Activated naive CD4-positive, alpha-beta T cell treated with anti-CD3 and anti-CD28 coated beads, Interleukin-2, amount 10 ng/mL, durations not matched to agents 7 days and 5 days (primary cell): ENCODE measurements at regions of chr11 and their contacts with region 1.

Region 1: DNA sequence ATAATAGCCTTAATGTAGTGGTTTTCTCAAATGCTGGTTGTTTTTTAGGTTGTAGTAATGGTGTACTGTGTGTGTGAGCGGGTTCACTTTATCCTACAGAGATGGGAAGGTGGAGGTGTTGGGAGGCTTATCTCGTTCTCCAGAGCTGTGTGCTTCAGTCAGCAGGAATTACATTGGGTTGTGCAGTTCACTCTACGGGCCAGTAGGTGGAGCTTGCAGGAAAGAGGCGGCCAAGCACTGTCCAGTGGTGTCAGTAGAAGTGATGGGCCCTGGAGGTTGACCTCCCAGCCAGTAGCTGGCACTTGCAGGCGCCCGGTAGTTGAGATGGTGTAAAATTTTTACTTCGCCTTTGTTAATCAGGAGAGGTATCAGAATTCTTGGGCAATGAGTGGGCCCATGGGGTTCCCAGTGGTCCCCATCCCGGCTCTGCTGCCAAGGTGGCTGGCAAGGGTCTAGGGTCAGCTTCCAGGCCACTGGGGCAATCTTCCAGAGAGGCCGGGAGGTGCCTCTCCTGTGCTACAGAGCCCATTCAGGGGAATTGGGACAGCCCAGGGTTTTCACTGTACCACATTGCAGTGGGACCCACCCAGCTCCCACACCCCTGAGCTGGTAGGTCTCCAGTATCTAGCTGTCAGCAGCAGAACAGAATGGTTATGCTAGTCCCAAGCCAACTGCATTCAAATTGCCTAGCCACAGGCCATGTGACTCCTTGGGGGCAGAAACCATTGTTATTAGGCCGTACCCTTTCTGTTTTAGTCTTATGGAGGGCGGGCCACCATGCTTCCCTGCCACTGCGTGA is 43.9 kb downstream of the BIRC2 start:
- DNase-seq: peak; percentile 64
- H3K4me3 Mint-ChIP-seq: no peak overlapping the region
- H3K27ac Mint-ChIP-seq: no peak overlapping the region
- H3K4me1 Mint-ChIP-seq: peaks cover 23% of the 10 kb centered on the region
- H3K27me3 Mint-ChIP-seq: no peaks in the 10 kb centered on the region

Region 2: GRCh38 chr11:102341844-102342318 is 49.0 kb before region 1 on chr11:
- CTCF ChIA-PET with region 1: interaction called, 14 read pairs
- DNase-seq: peak; percentile 81
- H3K4me3 Mint-ChIP-seq: no peak overlapping the region
- H3K27ac Mint-ChIP-seq: no peak overlapping the region
- H3K4me1 Mint-ChIP-seq: peaks cover 22% of the 10 kb centered on the region
- H3K27me3 Mint-ChIP-seq: no peaks in the 10 kb centered on the region

Region 3: DNA sequence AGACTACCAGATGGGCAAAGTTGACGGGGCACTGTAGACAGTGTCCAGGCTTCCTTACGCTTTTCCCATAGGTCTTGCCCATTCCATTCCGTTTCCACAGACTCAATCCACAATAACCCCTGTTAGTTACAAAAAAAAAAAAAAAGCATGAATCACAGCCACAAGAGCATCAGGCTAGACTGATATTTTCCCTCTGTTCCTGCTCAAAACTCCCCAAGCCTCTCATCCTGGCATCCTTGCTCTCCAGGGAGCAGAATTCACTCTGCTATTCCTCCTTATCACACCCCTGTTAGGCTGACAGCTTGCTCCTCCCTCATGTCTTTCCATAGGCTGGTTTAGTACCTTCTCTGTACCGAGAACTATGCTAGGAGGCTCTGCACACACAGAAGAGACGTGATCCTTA is 19.5 kb after region 1 on chr11:
- CTCF ChIA-PET with region 1: interaction called, 32 read pairs
- DNase-seq: no peak
- H3K4me3 Mint-ChIP-seq: no peak overlapping the region
- H3K27ac Mint-ChIP-seq: no peak overlapping the region
- H3K4me1 Mint-ChIP-seq: peaks cover 78% of the 10 kb centered on the region
- H3K27me3 Mint-ChIP-seq: no peaks in the 10 kb centered on the region

Region 4: GRCh38 chr11:102430158-102430836 is 39.4 kb after region 1 on chr11:
- CTCF ChIA-PET with region 1: interaction called, 10 read pairs
- DNase-seq: no peak
- H3K4me3 Mint-ChIP-seq: no peak overlapping the region
- H3K27ac Mint-ChIP-seq: peak overlapping the region; percentile 78
- H3K4me1 Mint-ChIP-seq: peaks cover 55% of the 10 kb centered on the region
- H3K27me3 Mint-ChIP-seq: no peaks in the 10 kb centered on the region

Region 5: DNA sequence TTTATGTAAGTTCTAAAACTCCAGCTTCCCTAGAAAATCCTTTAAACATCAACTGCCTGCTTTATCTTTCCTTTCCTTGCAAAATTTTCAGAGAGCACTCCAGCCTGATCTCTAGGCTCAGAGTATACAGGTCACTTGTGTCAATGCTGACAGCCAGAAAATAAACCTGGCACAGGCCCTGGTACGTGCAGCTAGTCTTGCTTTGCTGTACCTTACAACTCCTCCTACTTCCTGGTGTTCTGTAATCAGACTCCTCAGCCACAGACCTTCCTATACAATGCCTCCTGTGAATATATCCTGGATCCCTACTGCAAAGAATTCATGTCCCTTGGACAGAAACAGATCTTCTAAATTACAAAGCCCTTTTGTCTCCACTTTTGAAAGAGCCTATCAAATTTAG is 85.9 kb after region 1 on chr11:
- CTCF ChIA-PET with region 1: interaction called, 13 read pairs
- DNase-seq: peak; percentile 58
- H3K4me3 Mint-ChIP-seq: peak overlapping the region; percentile 22
- H3K27ac Mint-ChIP-seq: peak overlapping the region; percentile 89
- H3K4me1 Mint-ChIP-seq: peaks cover 64% of the 10 kb centered on the region
- H3K27me3 Mint-ChIP-seq: no peaks in the 10 kb centered on the region

Region 6: DNA sequence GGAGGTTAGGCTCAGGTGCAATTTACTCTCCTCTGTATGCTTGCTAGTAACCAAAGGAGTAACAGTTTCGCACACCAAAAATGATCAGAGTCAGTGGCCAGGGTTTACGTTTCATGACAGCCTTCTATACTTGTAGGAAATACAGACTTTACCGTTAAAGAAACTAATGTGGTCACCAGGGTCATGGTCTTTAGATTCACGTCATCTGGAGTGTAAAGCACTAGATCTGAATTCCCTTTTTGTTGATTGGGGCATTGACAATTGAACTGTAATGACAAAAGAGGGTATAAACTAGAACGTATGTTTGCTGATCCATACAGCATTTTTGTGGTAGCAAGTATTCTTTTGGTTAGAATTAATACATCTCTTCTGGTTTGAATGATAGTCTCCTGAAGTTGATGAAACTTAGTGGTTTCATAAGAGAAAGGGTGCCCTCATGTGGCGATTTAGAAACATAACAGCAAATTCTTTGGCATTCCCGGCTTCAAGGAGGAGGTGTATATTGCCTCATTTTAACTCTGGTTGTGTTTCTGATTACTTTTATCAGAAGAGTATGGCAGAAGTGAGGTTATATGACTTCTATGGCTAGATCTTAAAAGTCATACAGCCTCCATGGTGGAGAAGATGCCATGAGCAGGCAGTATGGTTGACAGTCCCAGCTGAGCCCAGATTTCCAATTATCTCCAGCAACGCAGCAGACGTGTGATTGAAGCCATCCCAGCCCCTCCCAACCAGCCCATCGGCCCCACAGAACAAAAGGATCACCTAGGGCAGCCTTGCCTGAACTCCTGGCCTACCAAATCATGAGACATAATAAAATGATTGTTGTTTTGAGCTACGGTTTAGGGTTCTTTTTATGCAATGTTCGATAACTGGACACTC is 104.5 kb after region 1 on chr11:
- CTCF ChIA-PET with region 1: interaction called, 45 read pairs
- DNase-seq: peak; percentile 44
- H3K4me3 Mint-ChIP-seq: no peak overlapping the region
- H3K27ac Mint-ChIP-seq: no peak overlapping the region
- H3K4me1 Mint-ChIP-seq: peaks cover 19% of the 10 kb centered on the region
- H3K27me3 Mint-ChIP-seq: peaks cover 26% of the 10 kb centered on the region